AG04449 (cell line): ENCODE measurements at regions of chr11 and their contacts with region 1.

Region 1: GRCh38 chr11:119030329-119031049 is at the start of gene SLC37A4:
- DNase-seq: peak; percentile 78
- H3K4me3 ChIP-seq: peak within 1 kb of the TSS; percentile 90
- CTCF ChIP-seq: peak; percentile 92

Region 2: GRCh38 chr11:119018074-119018938 is 12.2 kb before region 1 on chr11 and contains the starts of genes RPS25 and TRAPPC4:
- CTCF ChIA-PET with region 1: interaction called, 54 read pairs
- POLR2A ChIA-PET with region 1: interaction called, 3 read pairs
- DNase-seq: peak; percentile 75
- H3K4me3 ChIP-seq: peak within 1 kb of the TSS; percentile 94
- CTCF ChIP-seq: no peak

Region 3: DNA sequence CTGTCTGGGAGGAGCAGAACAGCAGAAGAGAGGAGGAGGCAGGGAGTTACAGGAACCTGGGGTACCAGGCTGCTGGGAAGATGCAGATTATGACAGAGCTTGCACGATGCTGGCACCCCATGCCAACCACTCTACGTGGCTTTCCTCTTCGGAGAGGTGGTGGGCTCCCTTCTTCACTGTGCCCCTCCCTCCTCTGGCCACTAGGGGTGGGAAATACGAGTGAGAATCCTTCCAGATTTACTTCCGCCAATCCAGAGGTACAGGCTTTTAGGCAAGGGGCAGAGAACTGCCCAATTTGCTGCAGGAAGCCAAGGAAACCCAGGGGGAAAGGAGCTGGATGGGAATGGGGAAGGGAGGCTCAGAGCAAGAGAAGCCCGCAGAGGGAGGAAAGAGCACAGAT is 14.2 kb after region 1 on chr11:
- CTCF ChIA-PET with region 1: interaction called, 38 read pairs
- POLR2A ChIA-PET with region 1: no interaction called
- DNase-seq: no peak
- H3K4me3 ChIP-seq: no peak overlapping the region
- CTCF ChIP-seq: no peak

Region 4: DNA sequence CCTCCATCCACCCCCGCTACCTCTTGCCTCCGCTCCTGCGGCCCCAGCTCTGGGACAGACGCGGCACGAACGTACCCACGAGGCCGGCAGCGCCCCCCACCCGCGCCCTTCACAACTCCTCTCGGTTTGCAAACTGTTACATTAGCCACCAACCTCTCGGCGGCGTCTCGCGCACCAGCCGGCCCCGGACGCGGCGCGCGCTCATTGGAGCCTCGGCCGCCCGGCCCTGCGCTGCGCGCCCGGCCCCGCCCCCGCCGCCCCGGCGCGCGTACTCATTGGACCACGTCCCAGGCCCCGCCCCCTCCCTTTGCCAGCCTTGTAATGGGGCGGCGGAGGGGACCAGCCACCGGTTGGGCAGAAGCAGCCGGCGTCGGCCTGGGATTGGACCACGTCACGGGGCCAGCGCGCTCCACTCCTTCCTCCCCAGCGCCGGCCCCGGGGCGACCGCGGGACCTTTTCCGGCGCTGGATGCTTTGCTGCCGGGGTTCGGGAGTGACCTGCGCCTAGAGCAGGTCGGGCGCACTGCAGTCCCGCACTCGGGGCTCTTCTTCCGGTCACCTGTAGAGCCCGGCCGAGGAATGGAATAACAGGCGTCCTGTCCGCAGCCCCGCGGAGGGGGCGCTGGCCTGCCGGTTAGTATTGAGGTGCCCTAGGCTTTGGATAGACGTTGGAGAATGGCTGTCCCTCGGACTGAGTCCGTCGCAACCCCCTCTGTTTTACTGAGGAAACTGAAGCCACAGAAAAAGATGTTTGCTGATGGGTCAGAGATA is 26.7 kb after region 1 on chr11 and contains the start of gene HYOU1:
- CTCF ChIA-PET with region 1: interaction called, 34 read pairs
- POLR2A ChIA-PET with region 1: no interaction called
- DNase-seq: peak; percentile 63
- H3K4me3 ChIP-seq: peak within 1 kb of the TSS; percentile 85
- CTCF ChIP-seq: peak; percentile 35

Region 5: DNA sequence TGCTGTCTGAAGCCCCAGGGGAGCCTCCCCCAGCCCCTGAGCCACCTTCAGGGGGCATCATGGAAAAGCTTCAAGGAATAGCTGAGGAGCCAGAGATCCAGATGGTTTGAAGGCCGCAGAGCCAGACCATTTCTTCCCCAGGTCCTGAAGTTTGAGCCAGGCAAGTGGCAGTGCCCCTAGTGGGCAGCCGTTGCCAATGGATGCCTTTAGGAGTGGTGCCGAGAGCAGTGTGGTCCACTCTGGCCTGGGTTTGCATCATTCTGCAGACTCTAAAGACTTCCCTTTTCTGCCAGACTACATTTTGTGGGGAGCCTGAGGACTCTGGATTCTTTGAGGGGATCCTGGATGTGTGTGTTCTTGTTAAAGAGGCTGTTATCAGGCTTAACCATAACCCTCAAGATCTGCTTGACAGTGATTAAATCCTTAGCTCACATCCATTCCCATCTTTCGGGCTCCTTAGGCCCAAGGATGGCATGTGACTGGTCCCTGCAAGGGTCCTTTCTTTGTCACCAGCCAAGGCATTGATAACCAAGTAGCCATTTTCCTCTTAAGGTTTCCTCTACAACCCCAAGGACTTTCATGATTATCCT is 104.0 kb after region 1 on chr11:
- CTCF ChIA-PET with region 1: no interaction called
- POLR2A ChIA-PET with region 1: no interaction called
- DNase-seq: no peak
- H3K4me3 ChIP-seq: no peak overlapping the region
- CTCF ChIP-seq: peak; percentile 56